ENCODE measurements at regions of chr1 and their contacts with region 1.

Region 1: GRCh38 chr1:48817505-48818114 is 40.9 kb upstream of the BEND5 start:
- DNase-seq: peak; percentile 71
- ATAC-seq: peak; percentile 66
- H3K4me3 ChIP-seq: no peak overlapping the region
- H3K4me3 Mint-ChIP-seq: no peak overlapping the region
- H3K27ac ChIP-seq: no peak overlapping the region
- H3K27ac Mint-ChIP-seq: no peak overlapping the region
- H3K4me1 ChIP-seq: peaks cover 9 to 20% of the 10 kb centered on the region in 2 donors
- H3K4me1 Mint-ChIP-seq: peaks cover 20% of the 10 kb centered on the region
- H3K27me3 ChIP-seq: no peaks in the 10 kb centered on the region
- H3K27me3 Mint-ChIP-seq: no peaks in the 10 kb centered on the region
- CTCF ChIP-seq: peak; percentile 73

Region 2: DNA sequence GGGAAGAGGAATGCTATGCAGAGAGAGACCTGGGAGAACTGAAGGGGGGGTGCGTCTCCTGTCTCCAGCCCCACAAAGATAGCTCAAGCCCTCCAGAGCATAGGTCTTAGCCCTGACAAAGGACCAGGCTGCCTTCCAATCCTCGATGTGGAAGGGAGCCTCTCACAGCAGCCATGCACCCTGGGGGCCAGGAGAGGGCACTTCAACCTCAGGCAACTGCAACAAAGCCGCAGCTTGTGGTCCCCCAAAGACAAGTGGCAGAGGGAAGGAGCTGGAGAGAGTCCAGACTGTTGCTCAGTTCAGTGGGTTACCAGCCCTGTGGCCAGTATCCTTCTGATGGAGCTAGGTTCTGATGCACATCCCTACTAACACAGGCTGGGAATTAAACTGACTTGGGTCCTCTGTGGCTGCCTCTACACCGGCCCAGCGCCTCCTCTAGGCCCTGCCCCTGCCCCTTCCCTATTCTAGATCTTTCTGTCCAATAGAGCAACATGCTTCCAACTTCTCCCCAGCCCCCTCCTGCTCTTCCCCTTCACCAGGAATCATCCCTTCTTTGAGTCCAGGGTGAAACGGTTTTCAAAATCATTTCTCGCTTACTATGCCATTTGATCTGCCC is 244.9 kb before region 1 on chr1:
- CTCF ChIA-PET with region 1: interaction called, 33 read pairs
- POLR2A ChIA-PET with region 1: no interaction called
- intact Hi-C with region 1: no loop called
- DNase-seq: peak; percentile 32
- ATAC-seq: no peak
- H3K4me3 ChIP-seq: no peak overlapping the region
- H3K4me3 Mint-ChIP-seq: no peak overlapping the region
- H3K27ac ChIP-seq: no peak overlapping the region
- H3K27ac Mint-ChIP-seq: no peak overlapping the region
- H3K4me1 ChIP-seq: no peaks in the 10 kb centered on the region
- H3K4me1 Mint-ChIP-seq: no peaks in the 10 kb centered on the region
- H3K27me3 ChIP-seq: no peaks in the 10 kb centered on the region
- H3K27me3 Mint-ChIP-seq: peaks cover 5% of the 10 kb centered on the region
- CTCF ChIP-seq: peak; percentile 35

Region 3: DNA sequence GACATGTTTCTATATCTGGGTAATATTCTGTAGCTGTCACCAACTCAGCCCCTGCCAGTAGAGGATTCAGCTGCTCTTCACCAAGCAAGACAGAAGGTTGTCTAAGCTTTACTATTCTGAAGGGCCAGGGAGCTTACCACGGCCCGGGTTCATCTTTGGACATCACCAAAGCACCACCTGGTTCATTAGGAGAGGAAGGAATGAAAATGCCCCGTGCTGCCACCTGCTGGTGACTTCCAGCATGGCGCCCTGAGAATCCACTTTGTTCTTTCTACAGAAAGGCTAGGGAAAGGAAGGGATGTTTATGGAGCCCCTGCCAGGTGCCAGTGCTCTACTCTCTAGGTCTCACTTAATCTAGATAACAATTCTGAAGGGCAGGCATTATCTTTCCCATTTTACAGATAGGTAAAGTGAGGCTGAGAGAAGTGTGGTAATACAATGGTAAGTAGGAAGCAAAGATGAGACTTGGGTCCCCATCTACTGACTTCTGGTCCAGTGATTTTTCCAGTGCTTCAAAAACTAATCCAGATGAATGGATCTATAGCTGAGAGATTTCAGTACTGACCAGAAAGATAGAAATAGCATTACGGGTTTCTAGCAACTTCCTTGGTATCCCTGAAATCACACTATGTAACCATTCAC is 120.4 kb before region 1 on chr1:
- CTCF ChIA-PET with region 1: interaction called, 34 read pairs
- POLR2A ChIA-PET with region 1: no interaction called
- intact Hi-C with region 1: loop called (anchors 1 kb)
- DNase-seq: peak; percentile 58
- ATAC-seq: no peak
- H3K4me3 ChIP-seq: no peak overlapping the region
- H3K4me3 Mint-ChIP-seq: no peak overlapping the region
- H3K27ac ChIP-seq: no peak overlapping the region
- H3K27ac Mint-ChIP-seq: no peak overlapping the region
- H3K4me1 ChIP-seq: no peaks in the 10 kb centered on the region
- H3K4me1 Mint-ChIP-seq: no peaks in the 10 kb centered on the region
- H3K27me3 ChIP-seq: peaks cover 0 to 6% (median 0%) of the 10 kb centered on the region in 4 experiments
- H3K27me3 Mint-ChIP-seq: peaks cover 9% of the 10 kb centered on the region
- CTCF ChIP-seq: peak; percentile 97

Region 4: DNA sequence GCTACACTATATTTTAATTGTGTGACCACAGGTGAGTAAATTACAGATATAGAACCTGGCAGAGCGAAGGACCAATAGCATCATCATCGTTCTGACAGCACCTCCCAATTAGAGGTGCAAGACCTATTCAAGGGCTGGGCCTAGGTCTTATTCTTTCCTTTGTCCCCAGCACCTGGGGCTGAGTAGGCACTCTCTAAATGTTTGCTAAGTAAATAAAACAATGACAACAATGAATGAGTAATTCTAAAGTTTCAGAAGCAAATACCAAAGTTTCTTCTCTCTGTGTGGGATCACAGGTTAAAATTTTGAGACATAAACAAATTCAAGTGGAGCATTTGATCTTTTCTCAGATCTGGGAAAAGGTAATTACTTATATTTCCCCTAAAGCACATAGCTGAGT is 73.5 kb before region 1 on chr1:
- CTCF ChIA-PET with region 1: interaction called, 63 read pairs
- POLR2A ChIA-PET with region 1: no interaction called
- intact Hi-C with region 1: no loop called
- DNase-seq: no peak
- ATAC-seq: no peak
- H3K4me3 ChIP-seq: no peak overlapping the region
- H3K4me3 Mint-ChIP-seq: no peak overlapping the region
- H3K27ac ChIP-seq: no peak overlapping the region
- H3K27ac Mint-ChIP-seq: no peak overlapping the region
- H3K4me1 ChIP-seq: no peaks in the 10 kb centered on the region
- H3K4me1 Mint-ChIP-seq: peaks cover 13% of the 10 kb centered on the region
- H3K27me3 ChIP-seq: no peaks in the 10 kb centered on the region
- H3K27me3 Mint-ChIP-seq: no peaks in the 10 kb centered on the region
- CTCF ChIP-seq: no peak

Region 5: GRCh38 chr1:48757363-48757762 is 60.2 kb before region 1 on chr1:
- CTCF ChIA-PET with region 1: interaction called, 19 read pairs
- POLR2A ChIA-PET with region 1: no interaction called
- intact Hi-C with region 1: no loop called
- DNase-seq: no peak
- ATAC-seq: no peak
- H3K4me3 ChIP-seq: no peak overlapping the region
- H3K4me3 Mint-ChIP-seq: no peak overlapping the region
- H3K27ac ChIP-seq: peak overlapping the region in 1 of 2 donors; percentile 74
- H3K27ac Mint-ChIP-seq: peak overlapping the region; percentile 50
- H3K4me1 ChIP-seq: peaks cover 44 to 60% of the 10 kb centered on the region in 2 donors
- H3K4me1 Mint-ChIP-seq: peaks cover 67% of the 10 kb centered on the region
- H3K27me3 ChIP-seq: no peaks in the 10 kb centered on the region
- H3K27me3 Mint-ChIP-seq: no peaks in the 10 kb centered on the region
- CTCF ChIP-seq: no peak

Region 6: DNA sequence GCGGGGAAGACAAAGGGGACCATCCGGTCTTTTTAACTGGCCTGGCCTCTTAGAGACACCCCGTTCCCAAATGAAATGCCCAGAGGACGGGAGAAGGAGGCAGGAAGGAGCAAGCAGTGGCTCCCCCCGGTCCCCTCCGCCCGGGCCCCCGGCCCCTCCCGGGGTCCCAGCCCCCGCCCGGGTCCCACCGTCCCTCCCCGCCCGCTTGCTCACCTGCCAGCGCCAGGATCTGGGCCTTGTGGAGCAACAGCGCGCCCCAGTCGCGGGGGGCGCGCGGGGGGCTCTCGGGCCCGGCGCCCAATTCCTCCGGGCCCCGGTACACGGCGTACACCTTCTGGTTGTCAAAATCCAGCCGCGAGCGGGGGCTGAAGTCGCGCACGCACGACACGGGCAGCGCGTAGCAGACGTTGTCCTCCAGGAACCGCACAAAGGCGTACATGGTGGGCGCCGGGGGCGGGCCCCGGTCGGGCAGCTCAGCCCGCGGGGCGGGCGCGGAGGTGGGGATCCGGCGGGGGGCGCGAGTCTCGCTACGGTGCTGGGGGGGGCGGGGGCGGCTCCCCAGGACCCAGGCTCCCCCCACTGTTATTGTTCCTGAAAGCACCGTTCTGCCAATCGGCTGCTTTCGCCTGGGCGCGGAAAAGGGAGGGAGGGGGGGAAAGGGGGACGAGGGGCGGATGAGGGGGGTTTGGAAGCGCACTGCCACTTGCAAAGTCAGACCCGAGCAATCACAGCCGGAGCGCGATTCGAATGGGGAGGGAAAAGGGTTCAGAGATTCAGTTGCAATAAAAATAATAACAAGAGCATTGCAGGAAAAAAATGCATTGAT is 41.0 kb before region 1 on chr1 and contains the start of gene BEND5:
- CTCF ChIA-PET with region 1: interaction called, 41 read pairs
- POLR2A ChIA-PET with region 1: no interaction called
- intact Hi-C with region 1: loop called (anchors 2 kb)
- DNase-seq: peak; percentile 82
- ATAC-seq: peak; percentile 80
- H3K4me3 ChIP-seq: peak within 1 kb of the TSS; percentile 59 to 85 (median 67)
- H3K4me3 Mint-ChIP-seq: peak within 1 kb of the TSS; percentile 97
- H3K27ac ChIP-seq: peak within 1 kb of the TSS; percentile 67 to 85
- H3K27ac Mint-ChIP-seq: peak within 1 kb of the TSS; percentile 95
- H3K4me1 ChIP-seq: peaks cover 59 to 63% of the 10 kb centered on the region in 2 donors
- H3K4me1 Mint-ChIP-seq: peaks cover 63% of the 10 kb centered on the region
- H3K27me3 ChIP-seq: no peaks in the 10 kb centered on the region
- H3K27me3 Mint-ChIP-seq: no peaks in the 10 kb centered on the region
- CTCF ChIP-seq: no peak
- total RNA-seq, gene BEND5: 15.5 and 19.5 TPM in 2 replicates

Measured in B cell (primary cell).